ENCODE measurements at regions of chr15 and their contacts with region 1.

Region 1: GRCh38 chr15:52466134-52466701 is 62.5 kb downstream of the MYO5A start:
- DNase-seq: peak; percentile 78
- H3K4me3 Mint-ChIP-seq: no peak overlapping the region
- H3K27ac Mint-ChIP-seq: no peak overlapping the region
- H3K4me1 Mint-ChIP-seq: peaks cover 29% of the 10 kb centered on the region
- H3K27me3 Mint-ChIP-seq: no peaks in the 10 kb centered on the region

Region 2: DNA sequence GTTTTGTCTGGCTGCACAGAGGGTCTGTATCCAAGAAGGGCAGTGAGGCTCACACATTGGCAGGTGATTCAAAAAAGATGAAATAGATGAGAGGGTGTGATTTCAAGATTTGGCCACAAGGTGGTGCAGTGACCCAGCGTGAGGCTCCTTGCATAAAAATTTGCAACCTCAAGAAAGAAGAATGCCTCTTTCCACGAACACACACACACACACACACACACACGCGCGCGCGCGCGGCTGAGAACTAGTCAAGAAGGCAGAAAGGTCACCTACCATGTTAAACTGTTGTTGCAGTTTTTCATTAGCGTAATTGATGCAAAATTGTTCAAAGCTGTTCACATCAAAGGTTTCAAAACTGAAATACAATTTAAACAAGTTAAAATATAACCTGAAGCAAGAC is 209.9 kb before region 1 on chr15:
- intact Hi-C with region 1: loop called (anchors 5 kb)
- DNase-seq: peak; percentile 93
- H3K4me3 Mint-ChIP-seq: peak overlapping the region; percentile 59
- H3K27ac Mint-ChIP-seq: peak overlapping the region; percentile 70
- H3K4me1 Mint-ChIP-seq: peaks cover 36% of the 10 kb centered on the region
- H3K27me3 Mint-ChIP-seq: no peaks in the 10 kb centered on the region

Region 3: DNA sequence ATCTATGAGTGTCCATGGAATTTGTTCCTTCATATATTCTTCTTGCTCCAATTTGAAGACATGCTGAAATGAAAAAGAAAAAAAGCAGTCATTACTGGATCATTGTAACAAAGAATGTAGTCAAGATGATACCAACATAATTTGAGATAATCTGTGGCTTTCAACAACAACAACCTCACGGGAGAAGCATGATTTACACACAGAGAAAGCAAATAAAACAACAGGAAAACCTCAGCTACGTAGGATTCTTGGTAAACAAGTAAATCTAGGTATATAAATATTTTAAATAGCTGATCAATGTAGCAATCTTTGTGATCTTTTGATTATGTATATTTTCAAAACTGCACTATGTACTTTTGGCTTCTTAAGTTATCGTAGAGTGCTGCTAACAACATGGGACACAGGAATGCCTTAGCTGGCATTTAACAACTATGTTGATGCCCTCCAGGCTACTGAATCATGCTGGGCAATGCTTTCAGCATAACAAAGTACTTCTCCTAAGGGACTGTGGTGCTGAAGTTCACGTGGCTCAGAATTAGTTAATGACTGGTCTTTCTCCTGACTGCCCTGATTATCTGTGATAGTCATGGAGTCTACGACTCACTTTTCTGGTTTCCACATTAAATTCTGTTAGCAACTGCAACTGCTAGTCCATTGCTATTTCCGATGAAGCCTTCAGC is 74.1 kb before region 1 on chr15:
- intact Hi-C with region 1: loop called (anchors 5 kb)
- DNase-seq: no peak
- H3K4me3 Mint-ChIP-seq: no peak overlapping the region
- H3K27ac Mint-ChIP-seq: no peak overlapping the region
- H3K4me1 Mint-ChIP-seq: peaks cover 5% of the 10 kb centered on the region
- H3K27me3 Mint-ChIP-seq: no peaks in the 10 kb centered on the region

Region 4: GRCh38 chr15:52440400-52440799 is 25.8 kb before region 1 on chr15:
- intact Hi-C with region 1: no loop called
- DNase-seq: no peak
- H3K4me3 Mint-ChIP-seq: no peak overlapping the region
- H3K27ac Mint-ChIP-seq: no peak overlapping the region
- H3K4me1 Mint-ChIP-seq: peaks cover 30% of the 10 kb centered on the region
- H3K27me3 Mint-ChIP-seq: no peaks in the 10 kb centered on the region

Region 5: DNA sequence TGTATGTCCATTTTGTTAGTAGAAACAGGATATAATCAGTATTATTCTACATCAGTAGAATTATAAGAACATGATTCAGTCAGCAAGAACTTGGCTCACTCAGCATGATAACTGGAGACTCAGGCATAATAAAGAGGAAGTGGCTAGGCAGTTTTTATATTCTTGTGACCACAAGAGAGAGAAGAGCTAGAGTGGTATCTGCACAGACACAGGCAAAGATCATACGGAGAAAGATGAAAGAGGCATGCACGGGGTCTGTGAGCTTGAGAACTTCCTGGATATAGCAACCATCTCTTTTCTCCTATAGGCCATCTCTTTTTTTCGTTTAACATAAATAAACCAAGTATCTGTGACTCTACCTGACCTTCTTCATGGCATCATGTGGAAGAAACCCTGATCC is 15.7 kb after region 1 on chr15:
- intact Hi-C with region 1: loop called (anchors 2 kb)
- DNase-seq: peak; percentile 89
- H3K4me3 Mint-ChIP-seq: peak overlapping the region; percentile 67
- H3K27ac Mint-ChIP-seq: peak overlapping the region; percentile 68
- H3K4me1 Mint-ChIP-seq: peaks cover 47% of the 10 kb centered on the region
- H3K27me3 Mint-ChIP-seq: no peaks in the 10 kb centered on the region

Region 6: DNA sequence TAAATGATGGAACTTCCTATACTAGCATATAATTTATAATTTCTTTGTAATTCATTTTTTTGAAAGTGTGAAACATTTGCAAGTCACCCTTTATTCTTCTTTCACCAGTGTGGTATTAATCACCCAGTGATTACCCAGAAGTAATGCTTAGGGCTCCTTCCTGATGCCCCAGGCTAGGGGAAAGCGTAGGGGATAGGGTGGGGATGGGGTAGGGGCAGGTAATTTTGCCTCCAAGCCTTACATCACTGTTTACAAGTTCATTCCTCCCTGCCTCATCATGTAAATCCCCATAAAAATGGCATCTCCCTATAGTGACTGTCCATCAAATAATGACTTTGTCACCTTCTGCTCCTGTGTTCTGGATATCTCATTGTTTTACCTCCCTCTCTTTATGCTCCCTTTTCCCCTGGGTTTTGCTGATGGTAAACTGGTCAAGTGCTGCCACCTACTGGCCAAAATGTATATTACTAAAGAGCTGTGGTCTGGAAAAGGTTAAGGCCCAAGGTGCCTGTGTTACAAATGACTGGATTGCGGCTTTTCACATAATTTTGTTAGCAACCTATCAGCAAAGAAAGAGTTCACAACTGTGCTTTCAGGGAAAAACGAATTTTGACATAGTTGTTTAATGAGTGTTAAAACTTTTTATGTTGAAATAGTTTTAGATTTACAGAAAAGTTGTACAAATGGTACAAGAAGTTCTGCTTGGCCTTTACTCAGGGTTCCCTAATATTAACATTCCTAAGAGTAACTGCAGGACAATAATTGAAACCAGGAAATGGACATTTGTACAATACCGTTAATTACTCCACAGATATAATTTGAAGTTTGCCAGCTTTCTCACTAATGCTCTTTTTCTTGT is 269.2 kb after region 1 on chr15:
- intact Hi-C with region 1: loop called (anchors 10 kb)
- DNase-seq: peak; percentile 94
- H3K4me3 Mint-ChIP-seq: no peak overlapping the region
- H3K27ac Mint-ChIP-seq: peak overlapping the region; percentile 18
- H3K4me1 Mint-ChIP-seq: peaks cover 17% of the 10 kb centered on the region
- H3K27me3 Mint-ChIP-seq: peaks cover 8% of the 10 kb centered on the region